GM13977 (cell line): ENCODE measurements at regions of chr6 and their contacts with region 1.

Region 1: DNA sequence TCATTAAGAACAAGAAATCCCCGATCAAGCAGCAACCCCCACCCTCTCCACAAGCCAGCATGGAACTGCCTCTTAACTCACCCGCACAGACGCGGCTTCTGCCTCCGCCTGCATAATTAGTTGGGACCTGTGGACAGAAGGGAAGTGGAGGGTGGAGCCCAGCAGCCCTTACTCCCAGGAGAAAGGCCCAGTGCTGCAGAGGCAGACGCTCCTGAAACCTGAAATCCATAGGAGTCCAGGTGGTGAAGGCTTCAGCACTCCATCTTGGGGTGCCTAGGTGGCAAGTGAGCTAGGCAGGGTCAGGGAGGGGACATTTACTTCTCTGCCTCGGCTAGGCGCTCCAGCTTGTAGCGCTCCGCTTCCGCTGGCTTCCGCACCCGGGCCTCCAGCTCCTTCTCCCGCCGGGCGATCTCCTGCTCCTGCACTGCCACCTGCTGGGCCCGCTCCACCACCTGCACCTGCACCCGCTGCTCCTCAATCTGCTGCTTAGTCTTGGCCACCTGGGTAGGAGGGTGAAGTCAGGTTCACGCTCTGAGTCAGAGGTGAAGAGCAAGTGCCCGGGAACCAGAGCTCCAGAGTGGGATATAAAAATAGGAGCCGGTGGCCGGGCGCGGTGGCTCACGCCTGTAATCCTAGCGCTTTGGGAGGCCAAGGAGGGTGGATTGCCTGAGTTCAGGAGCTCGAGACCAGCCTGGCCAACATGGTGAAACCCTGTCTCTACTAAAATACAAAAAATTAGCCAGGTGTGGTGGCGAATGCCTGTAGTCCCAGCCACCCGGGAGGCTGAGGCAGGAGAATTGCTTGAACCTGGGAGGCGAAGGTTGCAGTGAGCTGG is 10.7 kb downstream of the TUBB start:
- DNase-seq: peak; percentile 76
- CTCF ChIP-seq: peak; percentile 93

Region 2: GRCh38 chr6:30601815-30602641 is 128.8 kb before region 1 on chr6:
- in situ Hi-C with region 1: no loop called
- DNase-seq: no peak
- CTCF ChIP-seq: no peak

Region 3: GRCh38 chr6:30682143-30683117 is 48.4 kb before region 1 on chr6:
- in situ Hi-C with region 1: loop called (anchors 5 kb)
- DNase-seq: peak; percentile 81
- CTCF ChIP-seq: no peak